CD8-positive, alpha-beta memory T cell (primary cell): ENCODE measurements at regions of chr4 and their contacts with region 1.

Region 1: GRCh38 chr4:18593445-18594002 is 572.0 kb upstream of the LCORL start:
- DNase-seq: peak; percentile 17 to 60 (median 44)
- H3K4me3 ChIP-seq: no peak overlapping the region
- H3K4me3 Mint-ChIP-seq: no peak overlapping the region
- H3K27ac ChIP-seq: no peak overlapping the region
- H3K27ac Mint-ChIP-seq: no peak overlapping the region
- H3K4me1 ChIP-seq: no peaks in the 10 kb centered on the region
- H3K4me1 Mint-ChIP-seq: peaks cover 2 to 6% (median 5%) of the 10 kb centered on the region in 3 donors
- H3K27me3 ChIP-seq: no peaks in the 10 kb centered on the region
- H3K27me3 Mint-ChIP-seq: peaks cover 6 to 22% of the 10 kb centered on the region in 2 donors

Region 2: DNA sequence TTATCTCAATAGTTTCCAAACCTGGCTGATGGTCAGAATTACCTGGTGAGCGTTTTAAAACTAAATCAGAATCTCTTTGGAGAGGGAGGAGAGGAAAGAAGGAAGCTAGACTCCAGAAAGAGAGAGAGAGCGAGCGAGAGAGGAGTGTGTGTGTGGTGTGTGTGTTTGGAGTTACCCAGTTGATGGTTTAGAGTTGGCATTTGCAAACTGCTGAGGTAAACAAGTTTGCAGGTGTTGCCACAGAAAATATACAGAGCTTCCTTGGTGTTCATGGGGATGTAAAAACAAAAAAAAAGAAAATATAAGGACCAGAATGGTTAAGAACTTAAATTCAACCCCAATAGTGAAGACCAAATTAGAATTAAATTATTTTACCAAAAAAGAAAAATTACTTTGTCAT is 1043.0 kb before region 1 on chr4:
- CTCF ChIA-PET with region 1: interaction called, 16 read pairs
- POLR2A ChIA-PET with region 1: no interaction called
- DNase-seq: no peak
- H3K4me3 ChIP-seq: no peak overlapping the region
- H3K4me3 Mint-ChIP-seq: peak overlapping the region in 1 of 7 donors; percentile 35
- H3K27ac ChIP-seq: no peak overlapping the region
- H3K27ac Mint-ChIP-seq: no peak overlapping the region
- H3K4me1 ChIP-seq: no peaks in the 10 kb centered on the region
- H3K4me1 Mint-ChIP-seq: peaks cover 0 to 6% (median 6%) of the 10 kb centered on the region in 3 donors
- H3K27me3 ChIP-seq: no peaks in the 10 kb centered on the region
- H3K27me3 Mint-ChIP-seq: peaks cover 6 to 15% of the 10 kb centered on the region in 2 donors

Region 3: DNA sequence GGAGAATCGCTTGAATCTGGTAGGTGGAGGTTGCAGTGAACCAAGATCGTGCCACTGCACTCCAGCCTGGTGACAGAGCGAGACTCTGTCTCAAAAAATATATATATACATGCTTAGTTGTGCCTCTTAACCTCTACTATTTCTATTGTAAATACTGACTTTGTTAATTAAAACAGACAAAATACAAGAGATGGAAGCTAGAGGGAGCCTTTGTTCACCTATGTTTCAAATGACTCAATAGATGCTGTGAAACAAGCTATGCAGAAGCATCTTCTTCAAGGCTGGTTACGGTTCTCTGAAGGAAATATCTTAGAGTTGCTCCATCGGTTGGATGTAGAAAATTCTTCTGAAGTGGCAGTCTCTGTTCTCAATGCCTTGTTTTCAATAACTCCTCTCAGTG is 776.5 kb before region 1 on chr4:
- CTCF ChIA-PET with region 1: interaction called, 21 read pairs
- POLR2A ChIA-PET with region 1: no interaction called
- DNase-seq: peak in 2 of 5 donors; percentile 29 to 45
- H3K4me3 ChIP-seq: no peak overlapping the region
- H3K4me3 Mint-ChIP-seq: peak overlapping the region in 5 of 7 donors; percentile 30 to 68 (median 57)
- H3K27ac ChIP-seq: no peak overlapping the region
- H3K27ac Mint-ChIP-seq: peak overlapping the region in 4 of 8 donors; percentile 3 to 70 (median 44)
- H3K4me1 ChIP-seq: no peaks in the 10 kb centered on the region
- H3K4me1 Mint-ChIP-seq: peaks cover 25 to 46% (median 30%) of the 10 kb centered on the region in 3 donors
- H3K27me3 ChIP-seq: no peaks in the 10 kb centered on the region
- H3K27me3 Mint-ChIP-seq: no peaks in the 10 kb centered on the region

Region 4: DNA sequence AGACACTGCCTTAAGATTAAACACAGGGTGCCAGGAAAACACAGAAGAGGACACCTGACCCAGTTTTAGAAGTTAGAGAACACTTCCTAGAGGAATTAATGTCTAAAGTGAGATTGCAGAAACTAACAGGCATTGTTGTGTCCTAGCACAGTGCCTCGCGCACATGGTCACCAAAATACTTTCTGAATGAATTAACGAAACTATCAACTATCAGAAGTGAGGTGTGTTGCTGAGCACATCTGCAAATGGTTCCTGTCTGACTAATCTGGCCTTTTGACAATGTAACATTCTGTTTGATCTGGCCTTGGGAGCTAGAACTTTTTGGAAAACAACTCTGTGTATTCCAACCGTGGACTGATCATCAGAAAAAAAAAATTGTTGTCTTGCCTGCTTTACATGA is 15.2 kb before region 1 on chr4:
- CTCF ChIA-PET with region 1: no interaction called
- POLR2A ChIA-PET with region 1: no interaction called
- DNase-seq: no peak
- H3K4me3 ChIP-seq: no peak overlapping the region
- H3K4me3 Mint-ChIP-seq: no peak overlapping the region
- H3K27ac ChIP-seq: no peak overlapping the region
- H3K27ac Mint-ChIP-seq: no peak overlapping the region
- H3K4me1 ChIP-seq: no peaks in the 10 kb centered on the region
- H3K4me1 Mint-ChIP-seq: no peaks in the 10 kb centered on the region
- H3K27me3 ChIP-seq: no peaks in the 10 kb centered on the region
- H3K27me3 Mint-ChIP-seq: peaks cover 3 to 30% of the 10 kb centered on the region in 2 donors

Region 5: DNA sequence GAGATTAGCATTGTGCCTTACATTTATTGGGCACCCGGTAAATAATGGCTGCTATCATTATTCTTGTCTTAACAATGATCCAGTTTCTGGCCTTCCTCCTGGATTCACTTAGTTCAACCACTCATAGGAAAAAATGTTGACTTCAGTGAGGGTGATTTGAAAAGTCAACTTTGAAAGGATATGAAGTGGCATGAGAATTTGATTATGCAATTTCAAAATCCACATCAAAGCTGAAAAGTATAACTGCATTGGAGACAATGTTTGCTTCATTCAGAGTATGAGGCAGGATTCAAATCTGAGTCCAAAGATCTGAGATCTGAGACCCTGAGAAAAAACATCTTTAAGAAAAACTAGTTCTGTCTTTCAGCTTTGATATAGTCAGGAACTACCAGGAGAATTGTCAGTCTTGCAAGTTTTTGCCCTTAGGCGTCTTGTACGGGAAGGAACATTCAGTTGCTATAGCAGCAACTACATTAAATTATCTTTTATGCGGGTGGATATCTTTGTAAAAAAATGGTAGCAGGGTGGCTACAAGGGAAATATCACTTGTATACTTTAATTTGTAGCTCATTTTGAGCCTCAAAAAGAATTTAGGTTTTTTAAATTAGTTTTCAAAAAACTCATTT is 15.5 kb after region 1 on chr4:
- CTCF ChIA-PET with region 1: no interaction called
- POLR2A ChIA-PET with region 1: no interaction called
- DNase-seq: no peak
- H3K4me3 ChIP-seq: no peak overlapping the region
- H3K4me3 Mint-ChIP-seq: no peak overlapping the region
- H3K27ac ChIP-seq: no peak overlapping the region
- H3K27ac Mint-ChIP-seq: no peak overlapping the region
- H3K4me1 ChIP-seq: no peaks in the 10 kb centered on the region
- H3K4me1 Mint-ChIP-seq: peaks cover 0 to 2% (median 0%) of the 10 kb centered on the region in 3 donors
- H3K27me3 ChIP-seq: no peaks in the 10 kb centered on the region
- H3K27me3 Mint-ChIP-seq: peaks cover 2 to 35% of the 10 kb centered on the region in 2 donors

Region 6: GRCh38 chr4:18957721-18958120 is 364.2 kb after region 1 on chr4:
- CTCF ChIA-PET with region 1: no interaction called
- POLR2A ChIA-PET with region 1: no interaction called
- DNase-seq: no peak
- H3K4me3 ChIP-seq: no peak overlapping the region
- H3K4me3 Mint-ChIP-seq: no peak overlapping the region
- H3K27ac ChIP-seq: no peak overlapping the region
- H3K27ac Mint-ChIP-seq: no peak overlapping the region
- H3K4me1 ChIP-seq: no peaks in the 10 kb centered on the region
- H3K4me1 Mint-ChIP-seq: no peaks in the 10 kb centered on the region
- H3K27me3 ChIP-seq: no peaks in the 10 kb centered on the region
- H3K27me3 Mint-ChIP-seq: no peaks in the 10 kb centered on the region